ENCODE measurements at regions of chr3 and their contacts with region 1.

Region 1: GRCh38 chr3:70606018-70606417 is 293.6 kb upstream of the MDFIC2 start:
- DNase-seq: no peak
- ATAC-seq: no peak
- H3K4me3 ChIP-seq: no peak overlapping the region
- H3K27ac ChIP-seq: no peak overlapping the region
- H3K4me1 ChIP-seq: no peaks in the 10 kb centered on the region
- H3K27me3 ChIP-seq: no peaks in the 10 kb centered on the region
- CTCF ChIP-seq: no peak
- POLR2A ChIP-seq: no peak

Region 2: DNA sequence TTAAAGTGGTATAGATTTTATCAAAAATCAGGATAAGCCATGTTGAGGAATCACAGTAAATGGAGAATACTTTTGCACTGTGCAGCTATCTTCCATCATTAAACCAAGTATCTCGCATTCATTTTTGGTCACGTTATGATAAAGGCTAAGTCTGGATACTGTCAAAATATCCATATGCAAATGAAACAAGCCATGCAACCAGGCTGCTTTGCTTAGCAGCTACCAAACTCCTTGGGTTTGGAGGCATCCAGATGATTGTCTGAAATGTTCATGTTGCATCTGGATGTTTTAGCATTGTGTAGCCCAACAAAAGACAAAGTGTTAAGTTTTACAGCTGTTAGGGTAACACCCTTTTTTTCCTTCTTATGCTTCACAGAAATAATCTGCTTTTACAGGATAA is 29.3 kb after region 1 on chr3:
- intact Hi-C with region 1: loop called in 1 of 10 experiments (anchors 2 kb)
- DNase-seq: no peak
- ATAC-seq: no peak
- H3K4me3 ChIP-seq: no peak overlapping the region
- H3K27ac ChIP-seq: no peak overlapping the region
- H3K4me1 ChIP-seq: no peaks in the 10 kb centered on the region
- H3K27me3 ChIP-seq: peaks cover 0 to 4% (median 0%) of the 10 kb centered on the region in 9 donors
- CTCF ChIP-seq: no peak
- POLR2A ChIP-seq: no peak

Region 3: GRCh38 chr3:70716832-70717231 is 110.8 kb after region 1 on chr3:
- intact Hi-C with region 1: no loop called
- DNase-seq: peak in 3 of 5 donors; percentile 15 to 34 (median 33)
- ATAC-seq: peak in 3 of 4 donors; percentile 62 to 78 (median 70)
- H3K4me3 ChIP-seq: no peak overlapping the region
- H3K27ac ChIP-seq: no peak overlapping the region
- H3K4me1 ChIP-seq: peaks cover 0 to 7% (median 0%) of the 10 kb centered on the region in 12 donors
- H3K27me3 ChIP-seq: no peaks in the 10 kb centered on the region
- CTCF ChIP-seq: peak; percentile 32 to 74 (median 52)
- POLR2A ChIP-seq: no peak

Region 4: GRCh38 chr3:70871909-70872656 is 266.1 kb after region 1 on chr3:
- intact Hi-C with region 1: no loop called
- DNase-seq: no peak
- ATAC-seq: no peak
- H3K4me3 ChIP-seq: no peak overlapping the region
- H3K27ac ChIP-seq: no peak overlapping the region
- H3K4me1 ChIP-seq: no peaks in the 10 kb centered on the region
- H3K27me3 ChIP-seq: no peaks in the 10 kb centered on the region
- CTCF ChIP-seq: no peak
- POLR2A ChIP-seq: no peak

Measured in heart left ventricle (tissue), 16 donors.